Heart right ventricle (tissue), 16 donors: ENCODE measurements at regions of chr2 and their contacts with region 1.

Region 1: GRCh38 chr2:126657636-126658318 is 1.8 kb downstream of the GYPC start:
- DNase-seq: peak; percentile 76 to 83
- ATAC-seq: peak; percentile 50 to 91 (median 72)
- H3K4me3 ChIP-seq: peak overlapping the region; percentile 67 to 90 (median 77)
- H3K27ac ChIP-seq: peak overlapping the region; percentile 96 to 100 (median 99)
- H3K4me1 ChIP-seq: peaks cover 22 to 77% (median 70%) of the 10 kb centered on the region in 9 donors
- H3K27me3 ChIP-seq: no peaks in the 10 kb centered on the region
- CTCF ChIP-seq: peak in 1 of 9 donors; percentile 6

Region 2: GRCh38 chr2:126507425-126507911 is 150.3 kb before region 1 on chr2:
- intact Hi-C with region 1: no loop called
- DNase-seq: no peak
- ATAC-seq: peak in 1 of 8 donors; percentile 69
- H3K4me3 ChIP-seq: no peak overlapping the region
- H3K27ac ChIP-seq: no peak overlapping the region
- H3K4me1 ChIP-seq: peaks cover 0 to 13% (median 0%) of the 10 kb centered on the region in 9 donors
- H3K27me3 ChIP-seq: no peaks in the 10 kb centered on the region
- CTCF ChIP-seq: no peak

Region 3: DNA sequence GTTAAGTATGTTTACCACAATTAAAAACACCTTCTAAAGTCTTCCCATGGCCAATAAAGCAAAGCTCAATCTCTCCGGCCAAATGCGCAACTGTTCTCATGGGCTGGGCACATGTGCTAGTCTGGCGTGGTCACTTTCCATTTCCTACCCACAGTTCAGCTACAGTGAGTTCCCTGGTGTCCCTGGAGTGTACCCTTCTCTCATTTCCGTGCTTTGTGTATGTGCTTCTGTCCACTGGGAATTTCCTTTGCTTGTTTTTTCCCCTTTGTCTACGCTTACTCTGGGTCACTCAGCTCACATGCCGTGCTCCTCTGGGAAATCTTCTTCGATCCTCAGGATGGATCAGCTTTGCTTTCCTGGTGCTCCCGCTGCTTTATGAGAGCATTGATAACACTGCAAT is 71.5 kb before region 1 on chr2:
- intact Hi-C with region 1: loop called in 2 of 10 experiments (anchors 1 to 5 kb)
- DNase-seq: peak in 1 of 2 donors; percentile 61
- ATAC-seq: peak; percentile 82 to 99 (median 93)
- H3K4me3 ChIP-seq: no peak overlapping the region
- H3K27ac ChIP-seq: peak overlapping the region in 9 of 10 donors; percentile 32 to 80 (median 68)
- H3K4me1 ChIP-seq: peaks cover 0 to 26% (median 0%) of the 10 kb centered on the region in 9 donors
- H3K27me3 ChIP-seq: peaks cover 0 to 3% (median 0%) of the 10 kb centered on the region in 7 donors
- CTCF ChIP-seq: no peak